ENCODE measurements at regions of chr1 and their contacts with region 1.

Region 1: GRCh38 chr1:39901698-39902459 is at the start of gene MYCL:
- DNase-seq: peak; percentile 70
- H3K4me3 Mint-ChIP-seq: peak within 1 kb of the TSS; percentile 68
- H3K27ac Mint-ChIP-seq: no peak within 1 kb of the TSS
- H3K4me1 Mint-ChIP-seq: peaks cover 6% of the 10 kb centered on the region
- H3K27me3 Mint-ChIP-seq: peaks cover 68% of the 10 kb centered on the region
- total RNA-seq, gene MYCL: not detected

Region 2: GRCh38 chr1:39816415-39817090 is 85.3 kb before region 1 on chr1:
- CTCF ChIA-PET with region 1: interaction called, 20 read pairs
- POLR2A ChIA-PET with region 1: interaction called, 3 read pairs
- DNase-seq: peak; percentile 66
- H3K4me3 Mint-ChIP-seq: peak overlapping the region; percentile 30
- H3K27ac Mint-ChIP-seq: peak overlapping the region; percentile 81
- H3K4me1 Mint-ChIP-seq: peaks cover 9% of the 10 kb centered on the region
- H3K27me3 Mint-ChIP-seq: no peaks in the 10 kb centered on the region

Region 3: DNA sequence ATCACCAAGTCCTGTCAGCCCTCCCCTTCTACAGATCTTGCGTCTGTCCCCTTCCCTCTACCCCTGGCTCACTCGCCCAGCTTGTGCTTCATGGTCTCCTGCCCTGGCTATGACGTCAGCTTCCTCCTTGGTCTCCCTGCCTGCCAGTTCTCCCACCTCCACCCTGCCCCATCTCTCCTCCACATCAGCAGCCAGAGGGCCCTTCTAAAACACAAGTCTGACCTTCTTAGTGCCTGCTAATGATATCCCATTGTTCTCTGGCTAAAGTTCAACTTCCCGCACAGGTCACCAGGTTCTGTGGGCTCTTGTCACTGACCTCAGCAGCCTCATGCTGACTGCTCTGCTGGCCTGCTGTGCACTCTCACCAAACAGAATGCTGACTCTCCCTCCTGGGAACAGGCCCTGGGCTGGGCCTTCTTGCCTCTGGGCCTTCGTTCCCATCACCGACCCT is 24.5 kb after region 1 on chr1:
- CTCF ChIA-PET with region 1: interaction called, 13 read pairs
- POLR2A ChIA-PET with region 1: no interaction called
- DNase-seq: no peak
- H3K4me3 Mint-ChIP-seq: no peak overlapping the region
- H3K27ac Mint-ChIP-seq: no peak overlapping the region
- H3K4me1 Mint-ChIP-seq: peaks cover 2% of the 10 kb centered on the region
- H3K27me3 Mint-ChIP-seq: peaks cover 7% of the 10 kb centered on the region

Measured in activated CD4-positive, alpha-beta T cell treated with anti-CD3 and anti-CD28 coated beads, Interleukin-2, amount 10 ng/mL, durations not matched to agents 7 days and 5 days (primary cell).